ENCODE measurements at regions of chr13 and their contacts with region 1.

Region 1: DNA sequence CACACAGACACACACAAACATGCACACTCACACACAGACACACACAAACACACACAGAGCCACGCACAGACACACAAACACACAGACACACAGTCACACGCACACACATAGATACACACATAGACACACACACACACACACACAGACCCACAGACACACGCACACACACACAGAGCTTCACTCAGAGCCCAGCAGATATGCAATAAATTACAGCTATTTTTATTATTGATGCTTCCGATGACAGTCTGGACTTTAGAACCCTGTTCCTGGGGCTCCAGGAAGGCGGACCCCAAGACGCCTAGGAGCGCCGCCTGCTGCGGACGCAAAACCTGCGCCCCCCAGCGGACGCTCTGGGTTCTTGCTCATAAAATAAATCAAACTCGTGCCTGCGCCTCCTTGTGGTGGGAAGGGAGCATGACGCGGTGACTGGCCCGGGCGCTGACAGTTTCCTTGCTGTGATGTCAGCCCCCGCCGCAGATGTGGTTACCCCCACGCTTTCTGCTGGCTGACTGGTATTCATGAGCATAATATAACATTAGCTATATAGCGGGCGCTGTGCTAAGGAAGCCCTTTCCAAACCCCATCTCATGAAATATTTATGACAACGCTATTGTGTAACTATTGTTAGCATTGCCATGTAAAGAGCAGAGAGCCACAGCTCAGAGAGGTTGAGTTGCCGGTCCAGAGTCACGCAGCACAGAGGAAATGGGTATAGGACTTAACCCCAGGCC is 64.4 kb upstream of the TM9SF2 start:
- DNase-seq: peak; percentile 91 to 98 (median 94)
- ATAC-seq: peak; percentile 52
- H3K4me3 ChIP-seq: peak overlapping the region; percentile 32
- H3K4me3 Mint-ChIP-seq: peak overlapping the region; percentile 47
- H3K27ac ChIP-seq: peak overlapping the region in 1 of 2 donors; percentile 11
- H3K27ac Mint-ChIP-seq: peak overlapping the region; percentile 84
- H3K4me1 ChIP-seq: peaks cover 57% of the 10 kb centered on the region
- H3K4me1 Mint-ChIP-seq: peaks cover 64% of the 10 kb centered on the region
- H3K27me3 ChIP-seq: no peaks in the 10 kb centered on the region
- H3K27me3 Mint-ChIP-seq: no peaks in the 10 kb centered on the region
- CTCF ChIP-seq: peak; percentile 100

Region 2: GRCh38 chr13:99200432-99201167 is 236.3 kb before region 1 on chr13 and contains the start of gene UBAC2:
- CTCF ChIA-PET with region 1: interaction called, 5 read pairs
- POLR2A ChIA-PET with region 1: interaction called, 4 read pairs
- intact Hi-C with region 1: loop called (anchors 5 kb)
- DNase-seq: peak; percentile 90 to 100 (median 97)
- ATAC-seq: peak; percentile 79
- H3K4me3 ChIP-seq: peak within 1 kb of the TSS; percentile 99
- H3K4me3 Mint-ChIP-seq: peak within 1 kb of the TSS; percentile 95
- H3K27ac ChIP-seq: peak within 1 kb of the TSS; percentile 97 to 99
- H3K27ac Mint-ChIP-seq: peak within 1 kb of the TSS; percentile 93
- H3K4me1 ChIP-seq: peaks cover 36% of the 10 kb centered on the region
- H3K4me1 Mint-ChIP-seq: peaks cover 67% of the 10 kb centered on the region
- H3K27me3 ChIP-seq: no peaks in the 10 kb centered on the region
- H3K27me3 Mint-ChIP-seq: no peaks in the 10 kb centered on the region
- CTCF ChIP-seq: no peak
- total RNA-seq, gene UBAC2: 59.8 to 67.4 TPM

Region 3: DNA sequence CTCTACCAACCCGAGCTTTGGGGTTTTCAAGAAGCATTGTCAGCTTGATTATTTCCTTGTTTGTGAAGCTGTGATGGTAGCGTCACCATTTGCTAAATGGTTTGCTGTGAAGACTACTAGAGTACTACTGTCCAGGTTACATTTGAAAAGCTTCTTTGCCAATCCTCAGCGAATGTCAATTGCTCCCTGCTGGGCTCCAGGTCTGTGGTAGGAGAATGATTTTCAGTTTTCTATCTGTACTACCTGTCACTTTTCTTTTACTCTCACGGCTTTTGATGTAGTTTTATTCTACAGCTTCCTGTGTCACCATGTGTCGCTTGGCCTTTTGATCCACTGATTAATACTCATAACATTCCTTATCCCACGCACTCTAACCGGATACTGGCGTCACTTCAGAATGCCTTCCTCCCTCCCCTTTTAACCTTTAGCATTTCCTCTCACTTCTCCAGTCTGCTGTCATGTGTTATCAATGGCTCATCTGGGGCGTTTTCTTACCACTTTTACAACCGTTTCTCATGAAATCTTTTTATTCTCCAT is 122.1 kb before region 1 on chr13:
- CTCF ChIA-PET with region 1: interaction called, 11 read pairs
- POLR2A ChIA-PET with region 1: interaction called, 8 read pairs
- intact Hi-C with region 1: no loop called
- DNase-seq: peak in 7 of 14 experiments; percentile 26 to 92 (median 73)
- ATAC-seq: peak; percentile 83
- H3K4me3 ChIP-seq: peak overlapping the region; percentile 50
- H3K4me3 Mint-ChIP-seq: peak overlapping the region; percentile 61
- H3K27ac ChIP-seq: peak overlapping the region; percentile 88 to 89
- H3K27ac Mint-ChIP-seq: peak overlapping the region; percentile 89
- H3K4me1 ChIP-seq: peaks cover 72% of the 10 kb centered on the region
- H3K4me1 Mint-ChIP-seq: peaks cover 85% of the 10 kb centered on the region
- H3K27me3 ChIP-seq: no peaks in the 10 kb centered on the region
- H3K27me3 Mint-ChIP-seq: no peaks in the 10 kb centered on the region
- CTCF ChIP-seq: no peak

Region 4: GRCh38 chr13:99335603-99336002 is 101.2 kb before region 1 on chr13:
- CTCF ChIA-PET with region 1: interaction called, 13 read pairs
- POLR2A ChIA-PET with region 1: interaction called, 3 read pairs
- intact Hi-C with region 1: no loop called
- DNase-seq: no peak
- ATAC-seq: no peak
- H3K4me3 ChIP-seq: no peak overlapping the region
- H3K4me3 Mint-ChIP-seq: no peak overlapping the region
- H3K27ac ChIP-seq: no peak overlapping the region
- H3K27ac Mint-ChIP-seq: peak overlapping the region; percentile 77
- H3K4me1 ChIP-seq: peaks cover 42% of the 10 kb centered on the region
- H3K4me1 Mint-ChIP-seq: peaks cover 90% of the 10 kb centered on the region
- H3K27me3 ChIP-seq: no peaks in the 10 kb centered on the region
- H3K27me3 Mint-ChIP-seq: no peaks in the 10 kb centered on the region
- CTCF ChIP-seq: no peak

Region 5: GRCh38 chr13:99366075-99366987 is 70.5 kb before region 1 on chr13:
- CTCF ChIA-PET with region 1: interaction called, 13 read pairs
- POLR2A ChIA-PET with region 1: interaction called, 4 read pairs
- intact Hi-C with region 1: no loop called
- DNase-seq: peak in 2 of 14 experiments; percentile 31 to 58
- ATAC-seq: no peak
- H3K4me3 ChIP-seq: no peak overlapping the region
- H3K4me3 Mint-ChIP-seq: peak overlapping the region; percentile 79
- H3K27ac ChIP-seq: peak overlapping the region; percentile 25 to 65
- H3K27ac Mint-ChIP-seq: peak overlapping the region; percentile 97
- H3K4me1 ChIP-seq: peaks cover 54% of the 10 kb centered on the region
- H3K4me1 Mint-ChIP-seq: peaks cover 94% of the 10 kb centered on the region
- H3K27me3 ChIP-seq: no peaks in the 10 kb centered on the region
- H3K27me3 Mint-ChIP-seq: no peaks in the 10 kb centered on the region
- CTCF ChIP-seq: no peak

Region 6: GRCh38 chr13:99386911-99387788 is 49.7 kb before region 1 on chr13:
- CTCF ChIA-PET with region 1: interaction called, 77 read pairs
- POLR2A ChIA-PET with region 1: interaction called, 15 read pairs
- intact Hi-C with region 1: loop called (anchors 1 kb)
- DNase-seq: peak; percentile 81 to 94 (median 88)
- ATAC-seq: peak; percentile 22
- H3K4me3 ChIP-seq: no peak overlapping the region
- H3K4me3 Mint-ChIP-seq: peak overlapping the region; percentile 21
- H3K27ac ChIP-seq: peak overlapping the region; percentile 31 to 57
- H3K27ac Mint-ChIP-seq: peak overlapping the region; percentile 88
- H3K4me1 ChIP-seq: peaks cover 67% of the 10 kb centered on the region
- H3K4me1 Mint-ChIP-seq: peaks cover 61% of the 10 kb centered on the region
- H3K27me3 ChIP-seq: no peaks in the 10 kb centered on the region
- H3K27me3 Mint-ChIP-seq: no peaks in the 10 kb centered on the region
- CTCF ChIP-seq: peak; percentile 88

Region 7: DNA sequence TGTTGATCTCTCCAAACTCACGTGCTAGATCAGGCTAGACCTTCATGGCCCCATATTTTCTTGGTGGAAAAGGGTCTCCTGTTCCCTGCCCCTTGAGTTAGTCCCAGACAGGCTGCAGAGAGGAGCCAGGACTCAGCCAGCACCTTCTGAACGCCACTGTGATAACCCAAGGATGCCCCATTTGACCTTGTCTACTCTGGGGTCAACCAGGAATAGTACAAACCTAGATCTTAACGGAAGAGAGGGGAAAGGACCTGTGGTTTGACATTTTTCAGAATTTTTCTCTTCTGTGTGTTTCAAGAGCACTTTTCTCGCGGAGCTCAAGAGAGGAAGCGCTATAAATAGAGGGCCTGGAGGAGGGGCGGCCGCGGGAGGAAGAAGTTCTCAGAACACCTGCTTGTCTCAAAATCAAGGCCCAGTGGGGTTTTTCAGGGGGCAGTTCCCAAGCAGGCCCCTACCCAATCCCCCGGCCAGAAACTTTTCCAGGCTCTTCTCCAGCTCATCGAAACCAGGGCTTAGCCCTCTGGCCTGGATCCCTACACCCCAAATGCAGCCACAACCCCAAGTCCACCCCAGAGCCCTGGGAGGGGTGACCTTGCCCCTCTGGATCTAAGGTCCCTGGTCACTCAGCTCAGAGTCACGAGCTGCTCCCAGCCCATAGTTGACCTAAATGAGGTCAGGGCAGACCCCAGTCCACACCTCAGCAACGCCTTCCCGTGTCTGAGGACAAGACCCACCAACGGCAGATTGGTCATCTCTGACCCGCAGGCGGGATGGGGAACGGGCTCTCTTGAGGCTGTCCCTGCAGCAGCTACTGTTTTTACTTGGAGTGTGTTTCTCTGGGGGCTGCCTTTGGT is 11.1 kb before region 1 on chr13:
- CTCF ChIA-PET with region 1: interaction called, 88 read pairs
- POLR2A ChIA-PET with region 1: interaction called, 57 read pairs
- intact Hi-C with region 1: loop called (anchors 1 to 2 kb)
- DNase-seq: peak in 13 of 14 experiments; percentile 31 to 78 (median 62)
- ATAC-seq: peak; percentile 53
- H3K4me3 ChIP-seq: peak overlapping the region; percentile 15
- H3K4me3 Mint-ChIP-seq: peak overlapping the region; percentile 64
- H3K27ac ChIP-seq: peak overlapping the region; percentile 81 to 87
- H3K27ac Mint-ChIP-seq: peak overlapping the region; percentile 92
- H3K4me1 ChIP-seq: peaks cover 67% of the 10 kb centered on the region
- H3K4me1 Mint-ChIP-seq: peaks cover 72% of the 10 kb centered on the region
- H3K27me3 ChIP-seq: no peaks in the 10 kb centered on the region
- H3K27me3 Mint-ChIP-seq: no peaks in the 10 kb centered on the region
- CTCF ChIP-seq: no peak

Measured in CD4-positive, alpha-beta T cell (primary cell).